Activated CD4-positive, alpha-beta T cell treated with anti-CD3 and anti-CD28 coated beads, Interleukin-2, amount 10 ng/mL, durations not matched to agents 24 days and 14 days (primary cell): ENCODE measurements at regions of chr17 and their contacts with region 1.

Region 1: GRCh38 chr17:8248751-8249607 is at the start of gene PFAS:
- DNase-seq: peak; percentile 99
- H3K4me3 Mint-ChIP-seq: peak within 1 kb of the TSS; percentile 92
- H3K27ac Mint-ChIP-seq: peak within 1 kb of the TSS; percentile 99
- H3K4me1 Mint-ChIP-seq: peaks cover 36% of the 10 kb centered on the region
- H3K27me3 Mint-ChIP-seq: no peaks in the 10 kb centered on the region
- total RNA-seq, gene PFAS: 208 and 211 TPM in 2 replicates

Region 2: GRCh38 chr17:8173056-8173870 is 75.7 kb before region 1 on chr17:
- intact Hi-C with region 1: loop called (anchors 5 kb)
- DNase-seq: peak; percentile 93
- H3K4me3 Mint-ChIP-seq: peak overlapping the region; percentile 98
- H3K27ac Mint-ChIP-seq: peak overlapping the region; percentile 99
- H3K4me1 Mint-ChIP-seq: peaks cover 38% of the 10 kb centered on the region
- H3K27me3 Mint-ChIP-seq: no peaks in the 10 kb centered on the region

Region 3: DNA sequence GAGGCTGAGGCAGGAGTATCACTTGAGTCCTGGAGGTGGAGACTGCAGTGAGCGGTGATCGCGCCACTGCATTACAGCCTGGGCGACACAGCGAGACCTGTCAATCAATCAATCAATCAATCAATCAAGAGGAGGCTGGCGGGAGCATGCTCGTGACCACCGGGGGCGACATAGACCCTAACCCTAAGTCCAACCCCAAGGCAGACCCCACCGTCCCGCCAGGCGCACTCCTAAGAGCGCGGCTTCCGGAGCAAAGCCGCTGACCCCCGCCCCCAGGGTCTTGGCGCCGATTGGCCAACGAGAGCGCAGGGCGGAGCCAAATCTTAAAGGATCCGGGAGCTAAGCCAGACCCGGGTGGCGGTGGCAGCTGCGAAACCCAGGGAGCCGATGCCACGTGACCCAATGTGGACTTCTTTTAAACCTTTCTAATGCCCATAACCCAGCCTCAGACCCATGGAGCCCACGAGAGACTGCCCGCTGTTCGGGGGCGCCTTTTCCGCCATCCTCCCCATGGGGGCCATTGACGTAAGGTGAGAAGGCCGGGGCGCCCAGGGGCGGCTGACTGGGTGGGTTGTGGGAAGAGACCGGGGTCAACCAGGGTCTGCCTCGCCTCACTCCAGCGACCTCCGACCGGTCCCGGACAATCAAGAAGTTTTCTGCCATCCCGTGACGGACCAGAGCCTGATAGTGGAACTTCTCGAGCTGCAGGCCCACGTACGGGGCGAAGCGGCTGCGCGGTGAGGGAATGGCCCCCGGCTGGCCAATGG is 39.5 kb after region 1 on chr17 and contains the start of gene RANGRF:
- intact Hi-C with region 1: loop called (anchors 1 kb)
- DNase-seq: peak; percentile 97
- H3K4me3 Mint-ChIP-seq: peak within 1 kb of the TSS; percentile 99
- H3K27ac Mint-ChIP-seq: peak within 1 kb of the TSS; percentile 96
- H3K4me1 Mint-ChIP-seq: peaks cover 37% of the 10 kb centered on the region
- H3K27me3 Mint-ChIP-seq: no peaks in the 10 kb centered on the region
- total RNA-seq, gene RANGRF: 57.5 and 66.3 TPM in 2 replicates

Region 4: DNA sequence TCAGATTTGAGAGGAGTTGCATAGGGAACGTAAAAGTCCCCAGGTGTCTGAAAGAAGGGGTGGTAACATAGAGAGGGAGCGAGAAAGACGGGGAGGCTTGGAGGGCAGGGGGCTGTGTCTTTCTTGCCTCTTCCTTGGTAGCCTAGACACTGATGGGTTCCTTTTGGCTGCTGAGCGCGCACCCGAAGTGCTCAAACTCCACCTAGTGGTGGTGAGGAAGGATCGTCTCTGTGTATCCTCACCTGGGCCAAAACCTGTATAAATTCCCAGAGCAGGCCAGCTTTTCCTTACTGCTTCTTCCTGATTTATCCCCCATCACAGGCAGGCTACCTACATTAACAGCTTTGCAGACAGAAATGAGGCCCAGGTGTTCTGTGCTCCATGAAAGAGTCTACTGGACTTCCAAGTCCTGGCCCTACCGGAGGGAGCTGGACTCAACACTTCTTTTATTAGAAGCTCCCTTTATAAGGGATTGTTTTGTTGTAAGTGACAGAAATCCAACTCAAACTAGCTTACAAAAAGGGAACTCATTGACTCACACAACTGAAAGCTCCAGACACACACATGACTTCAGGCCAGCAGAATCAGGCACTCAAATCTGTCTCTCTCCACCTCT is 51.8 kb after region 1 on chr17:
- intact Hi-C with region 1: loop called (anchors 5 kb)
- DNase-seq: peak; percentile 87
- H3K4me3 Mint-ChIP-seq: no peak overlapping the region
- H3K27ac Mint-ChIP-seq: no peak overlapping the region
- H3K4me1 Mint-ChIP-seq: peaks cover 8% of the 10 kb centered on the region
- H3K27me3 Mint-ChIP-seq: no peaks in the 10 kb centered on the region

Region 5: DNA sequence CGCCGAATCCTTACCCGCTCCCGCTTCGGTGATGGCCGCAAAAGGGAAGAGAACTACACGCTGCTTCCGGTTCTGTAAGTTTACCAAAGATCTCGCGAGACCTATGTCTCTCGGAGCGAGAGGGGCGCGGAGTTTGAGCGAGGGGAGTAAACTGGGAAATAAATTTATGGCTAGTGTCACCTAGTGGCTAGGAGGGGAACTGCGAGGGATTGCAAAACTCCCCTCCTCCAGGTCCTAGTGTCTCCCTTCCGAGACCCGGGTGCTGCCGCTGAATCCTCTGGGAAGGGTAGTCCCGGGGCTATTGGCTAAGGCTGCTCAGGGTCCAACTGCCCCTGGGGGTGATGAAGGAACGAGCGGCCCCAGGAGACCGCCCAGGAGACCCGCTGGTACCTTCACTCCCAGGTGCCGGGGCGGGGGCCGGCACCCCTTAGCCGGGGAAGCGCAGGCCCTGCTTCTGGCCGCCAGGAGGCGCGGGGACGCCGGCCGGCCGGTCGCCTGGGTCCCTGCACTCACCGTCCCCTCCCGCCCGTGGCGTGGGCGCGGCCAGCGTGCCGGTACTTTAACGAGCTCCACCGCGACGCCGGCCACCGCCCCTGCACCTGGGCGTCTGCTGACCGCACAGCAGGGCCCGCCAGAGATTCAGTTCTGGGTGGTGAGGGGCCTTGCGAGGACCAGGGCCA is 134.3 kb after region 1 on chr17 and contains the start of gene RPL26:
- intact Hi-C with region 1: loop called (anchors 2 kb)
- DNase-seq: peak; percentile 98
- H3K4me3 Mint-ChIP-seq: peak within 1 kb of the TSS; percentile 99
- H3K27ac Mint-ChIP-seq: peak within 1 kb of the TSS; percentile 95
- H3K4me1 Mint-ChIP-seq: peaks cover 40% of the 10 kb centered on the region
- H3K27me3 Mint-ChIP-seq: no peaks in the 10 kb centered on the region
- total RNA-seq, gene RPL26: 2,460 and 2,469 TPM in 2 replicates

Region 6: GRCh38 chr17:8503368-8503767 is 254.4 kb after region 1 on chr17:
- intact Hi-C with region 1: no loop called
- DNase-seq: no peak
- H3K4me3 Mint-ChIP-seq: no peak overlapping the region
- H3K27ac Mint-ChIP-seq: no peak overlapping the region
- H3K4me1 Mint-ChIP-seq: peaks cover 2% of the 10 kb centered on the region
- H3K27me3 Mint-ChIP-seq: no peaks in the 10 kb centered on the region